ENCODE measurements at regions of chr3 and their contacts with region 1.

Region 1: GRCh38 chr3:159458010-159458409 is 530.6 kb upstream of the IL12A start:
- DNase-seq: peak; percentile 88
- H3K4me3 Mint-ChIP-seq: peak overlapping the region; percentile 55
- H3K27ac Mint-ChIP-seq: peak overlapping the region; percentile 86
- H3K4me1 Mint-ChIP-seq: peaks cover 73% of the 10 kb centered on the region
- H3K27me3 Mint-ChIP-seq: no peaks in the 10 kb centered on the region
- CTCF ChIP-seq: no peak

Region 2: DNA sequence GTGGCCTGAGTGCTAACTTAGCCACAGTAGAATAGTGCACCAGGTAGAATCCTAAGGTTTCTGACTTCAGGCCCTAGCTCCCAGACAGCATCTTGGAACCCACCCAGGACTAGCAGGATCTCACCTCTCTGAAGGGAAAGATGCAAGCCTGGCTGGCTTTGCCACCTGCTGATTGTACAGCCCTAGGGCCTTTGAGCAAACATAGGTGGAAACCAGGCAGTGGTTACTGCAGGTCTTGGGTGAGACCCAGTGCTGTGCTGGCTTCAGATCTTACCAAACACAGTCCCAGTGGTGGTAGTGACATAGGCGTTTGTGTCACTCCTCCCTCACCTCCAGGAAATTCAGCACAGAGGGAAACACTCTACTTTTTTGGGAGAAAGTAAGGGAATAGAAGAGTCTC is 53.4 kb before region 1 on chr3:
- CTCF ChIA-PET with region 1: no interaction called
- intact Hi-C with region 1: no loop called
- DNase-seq: no peak
- H3K4me3 Mint-ChIP-seq: no peak overlapping the region
- H3K27ac Mint-ChIP-seq: no peak overlapping the region
- H3K4me1 Mint-ChIP-seq: no peaks in the 10 kb centered on the region
- H3K27me3 Mint-ChIP-seq: no peaks in the 10 kb centered on the region
- CTCF ChIP-seq: no peak

Region 3: GRCh38 chr3:159418571-159419526 is 39.2 kb before region 1 on chr3:
- CTCF ChIA-PET with region 1: interaction called, 3 read pairs
- intact Hi-C with region 1: loop called (anchors 1 kb)
- DNase-seq: peak; percentile 53
- H3K4me3 Mint-ChIP-seq: peak overlapping the region; percentile 14
- H3K27ac Mint-ChIP-seq: peak overlapping the region; percentile 71
- H3K4me1 Mint-ChIP-seq: peaks cover 25% of the 10 kb centered on the region
- H3K27me3 Mint-ChIP-seq: no peaks in the 10 kb centered on the region
- CTCF ChIP-seq: no peak

Region 4: GRCh38 chr3:159443266-159443665 is 14.7 kb before region 1 on chr3:
- CTCF ChIA-PET with region 1: no interaction called
- intact Hi-C with region 1: no loop called
- DNase-seq: no peak
- H3K4me3 Mint-ChIP-seq: no peak overlapping the region
- H3K27ac Mint-ChIP-seq: no peak overlapping the region
- H3K4me1 Mint-ChIP-seq: no peaks in the 10 kb centered on the region
- H3K27me3 Mint-ChIP-seq: no peaks in the 10 kb centered on the region
- CTCF ChIP-seq: no peak